ENCODE measurements at regions of chr14 and their contacts with region 1.

Region 1: GRCh38 chr14:105086833-105087307 is 21.6 kb upstream of the GPR132 start:
- DNase-seq: peak; percentile 71
- H3K4me3 Mint-ChIP-seq: peak overlapping the region; percentile 75
- H3K27ac Mint-ChIP-seq: peak overlapping the region; percentile 34
- H3K4me1 Mint-ChIP-seq: no peaks in the 10 kb centered on the region
- H3K27me3 Mint-ChIP-seq: peaks cover 15% of the 10 kb centered on the region

Region 2: DNA sequence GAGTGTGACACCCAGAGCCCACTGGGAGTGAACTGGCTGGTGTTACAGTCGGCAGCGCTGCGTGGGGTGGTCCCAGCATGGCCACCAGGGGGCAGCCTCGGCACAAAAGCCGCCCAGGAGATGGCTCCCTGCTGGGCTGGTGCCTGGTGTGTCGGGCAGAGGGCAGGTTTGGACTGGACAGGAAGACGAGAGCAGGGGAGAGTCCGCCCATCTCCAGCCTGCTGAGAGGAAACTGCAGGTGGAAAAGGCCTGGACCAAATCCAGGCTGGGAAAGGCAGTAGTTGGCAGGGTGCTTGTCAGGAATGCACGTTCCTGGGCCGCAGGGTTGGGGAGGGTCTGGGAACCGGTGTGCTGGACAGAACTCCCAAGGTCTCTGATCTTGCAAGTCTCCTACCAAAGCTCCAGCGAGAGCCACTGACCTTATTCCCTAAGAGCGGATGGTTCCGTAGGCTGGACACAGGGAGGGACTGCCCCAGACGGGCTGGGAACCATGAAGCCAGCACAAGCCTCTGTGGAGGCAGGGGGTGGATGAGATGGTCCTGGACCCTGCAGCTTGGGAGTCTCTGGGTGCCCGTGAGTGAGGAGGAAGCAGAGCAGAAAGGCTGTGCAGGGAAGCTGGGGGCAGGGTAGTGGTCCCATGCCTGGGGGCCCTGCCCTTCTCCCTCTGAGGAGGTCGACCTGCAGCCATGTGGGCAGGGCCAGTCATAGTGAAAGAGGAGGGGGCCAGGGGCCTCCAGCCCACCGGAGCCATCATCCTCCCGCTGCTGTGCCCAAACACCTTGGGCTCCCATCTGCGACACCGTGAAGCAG is 110.5 kb before region 1 on chr14:
- intact Hi-C with region 1: loop called (anchors 2 kb)
- DNase-seq: peak; percentile 77
- H3K4me3 Mint-ChIP-seq: peak overlapping the region; percentile 64
- H3K27ac Mint-ChIP-seq: peak overlapping the region; percentile 35
- H3K4me1 Mint-ChIP-seq: peaks cover 11% of the 10 kb centered on the region
- H3K27me3 Mint-ChIP-seq: peaks cover 24% of the 10 kb centered on the region

Region 3: GRCh38 chr14:105059035-105059924 is 27.6 kb before region 1 on chr14:
- intact Hi-C with region 1: loop called (anchors 1 kb)
- DNase-seq: no peak
- H3K4me3 Mint-ChIP-seq: peak overlapping the region; percentile 80
- H3K27ac Mint-ChIP-seq: peak overlapping the region; percentile 100
- H3K4me1 Mint-ChIP-seq: peaks cover 45% of the 10 kb centered on the region
- H3K27me3 Mint-ChIP-seq: no peaks in the 10 kb centered on the region

Region 4: DNA sequence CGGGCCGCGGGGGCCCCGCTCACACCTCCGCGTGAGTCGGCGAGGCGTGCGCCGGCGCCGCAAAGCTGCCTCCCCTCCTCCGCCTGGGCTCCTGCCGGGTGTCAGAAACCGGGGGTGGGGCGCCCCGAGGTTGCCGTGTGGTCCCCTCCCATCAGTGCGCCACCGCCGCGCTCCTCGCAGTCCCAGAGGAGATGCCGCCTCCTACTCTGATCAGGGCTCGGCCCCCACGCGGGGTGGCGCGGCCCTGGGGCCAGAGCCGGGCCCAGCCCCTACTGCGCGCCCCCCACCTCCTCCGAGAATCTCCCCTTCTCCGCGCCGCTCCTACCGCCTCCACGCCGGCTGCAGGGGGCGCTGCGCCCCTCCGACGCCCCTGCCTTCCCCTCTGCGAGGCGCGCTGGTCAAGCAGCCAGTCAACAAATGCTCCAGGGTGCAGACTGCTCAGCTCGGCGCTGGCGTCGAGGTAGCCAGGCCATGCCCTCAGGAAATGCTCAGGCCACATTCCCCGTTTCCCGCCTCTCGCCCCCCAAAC is 82.2 kb after region 1 on chr14:
- intact Hi-C with region 1: loop called (anchors 5 kb)
- DNase-seq: peak; percentile 25
- H3K4me3 Mint-ChIP-seq: peak overlapping the region; percentile 59
- H3K27ac Mint-ChIP-seq: no peak overlapping the region
- H3K4me1 Mint-ChIP-seq: peaks cover 6% of the 10 kb centered on the region
- H3K27me3 Mint-ChIP-seq: peaks cover 21% of the 10 kb centered on the region

Region 5: DNA sequence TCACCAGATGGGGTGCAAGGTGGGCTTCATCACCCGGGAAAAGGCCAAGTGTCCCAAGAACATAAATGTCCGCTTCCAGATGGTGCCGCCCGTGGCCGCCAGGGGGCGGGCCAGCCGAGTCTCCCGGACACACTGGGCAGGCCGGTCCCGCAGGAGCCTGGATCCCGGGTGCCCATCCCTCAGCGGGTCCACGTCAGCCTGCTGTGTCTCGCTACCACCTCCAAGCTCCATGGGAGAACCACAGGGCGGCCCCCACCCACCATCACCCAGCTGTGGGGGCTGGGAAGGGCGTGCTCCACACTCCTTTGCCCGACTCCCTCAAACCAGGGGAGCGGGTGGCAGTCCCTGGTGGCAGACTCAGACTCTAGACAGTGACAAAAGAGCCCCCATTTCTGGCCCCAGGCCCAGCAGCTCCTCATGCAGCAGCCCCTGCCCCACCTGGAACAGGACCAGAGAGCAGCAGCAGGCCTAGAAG is 116.2 kb after region 1 on chr14:
- intact Hi-C with region 1: loop called (anchors 5 kb)
- DNase-seq: peak; percentile 55
- H3K4me3 Mint-ChIP-seq: no peak overlapping the region
- H3K27ac Mint-ChIP-seq: no peak overlapping the region
- H3K4me1 Mint-ChIP-seq: peaks cover 5% of the 10 kb centered on the region
- H3K27me3 Mint-ChIP-seq: no peaks in the 10 kb centered on the region

Region 6: GRCh38 chr14:105300792-105301533 is 214.1 kb after region 1 on chr14 and contains the start of gene BRF1:
- intact Hi-C with region 1: loop called (anchors 5 kb)
- DNase-seq: peak; percentile 97
- H3K4me3 Mint-ChIP-seq: peak within 1 kb of the TSS; percentile 91
- H3K27ac Mint-ChIP-seq: peak within 1 kb of the TSS; percentile 91
- H3K4me1 Mint-ChIP-seq: peaks cover 36% of the 10 kb centered on the region
- H3K27me3 Mint-ChIP-seq: peaks cover 4% of the 10 kb centered on the region
- total RNA-seq, gene BRF1: 46.1 and 46.9 TPM in 2 replicates

Region 7: GRCh38 chr14:105414456-105415371 is 327.8 kb after region 1 on chr14:
- intact Hi-C with region 1: loop called (anchors 5 kb)
- DNase-seq: peak; percentile 61
- H3K4me3 Mint-ChIP-seq: peak overlapping the region; percentile 79
- H3K27ac Mint-ChIP-seq: no peak overlapping the region
- H3K4me1 Mint-ChIP-seq: peaks cover 5% of the 10 kb centered on the region
- H3K27me3 Mint-ChIP-seq: peaks cover 22% of the 10 kb centered on the region

Measured in activated T-helper 1 cell treated with anti-CD3 and anti-CD28 coated beads, Interleukin-12 subunit alpha, Interleukin-12 subunit beta, Interleukin-2, Interleukin-4 antibody, amounts not matched to agents 30 ng/mL and 10 ng/mL and 1 ng/mL, durations not matched to agents 14 hours and 24 hours and 36 hours (primary cell).